ENCODE measurements at regions of chr4 and their contacts with region 1.

Region 1: GRCh38 chr4:103204111-103204510 is 6.0 kb upstream of the CENPE start:
- ATAC-seq: peak in 5 of 8 experiments; percentile 35 to 64 (median 48)
- H3K4me3 ChIP-seq: no peak overlapping the region
- H3K27ac ChIP-seq: no peak overlapping the region
- H3K4me1 ChIP-seq: no peaks in the 10 kb centered on the region

Region 2: GRCh38 chr4:102945066-102945465 is 259.0 kb before region 1 on chr4:
- in situ Hi-C with region 1: no loop called
- ATAC-seq: no peak
- H3K4me3 ChIP-seq: no peak overlapping the region
- H3K27ac ChIP-seq: no peak overlapping the region
- H3K4me1 ChIP-seq: no peaks in the 10 kb centered on the region

Region 3: GRCh38 chr4:102988429-102989020 is 215.6 kb before region 1 on chr4:
- in situ Hi-C with region 1: no loop called
- ATAC-seq: no peak
- H3K4me3 ChIP-seq: no peak overlapping the region
- H3K27ac ChIP-seq: no peak overlapping the region
- H3K4me1 ChIP-seq: no peaks in the 10 kb centered on the region

Region 4: DNA sequence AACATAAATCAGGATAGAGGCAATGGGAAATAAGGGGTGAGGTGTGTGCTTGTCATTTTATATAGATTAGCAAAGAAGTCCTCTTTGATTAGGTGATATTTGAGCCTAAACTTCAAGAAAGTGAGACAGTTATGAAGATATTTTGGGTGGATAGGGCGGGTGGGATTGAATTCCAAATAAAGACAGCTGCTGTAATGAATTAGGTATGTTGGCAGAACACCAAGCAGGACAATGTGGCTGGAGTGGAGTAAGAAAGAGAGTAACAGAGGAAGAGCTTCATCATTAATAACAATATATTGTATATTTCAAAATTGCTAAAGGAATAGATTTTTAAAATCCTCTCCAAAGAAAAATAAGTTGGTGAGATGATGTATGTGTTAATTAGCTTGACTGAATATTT is 85.1 kb after region 1 on chr4:
- in situ Hi-C with region 1: no loop called
- ATAC-seq: peak in 1 of 8 experiments; percentile 50
- H3K4me3 ChIP-seq: no peak overlapping the region
- H3K27ac ChIP-seq: no peak overlapping the region
- H3K4me1 ChIP-seq: peaks cover 0 to 2% of the 10 kb centered on the region in 2 donors

Region 5: GRCh38 chr4:103498161-103499070 is 294.3 kb after region 1 on chr4:
- in situ Hi-C with region 1: no loop called
- ATAC-seq: peak in 2 of 8 experiments; percentile 64 to 91
- H3K4me3 ChIP-seq: no peak overlapping the region
- H3K27ac ChIP-seq: no peak overlapping the region
- H3K4me1 ChIP-seq: no peaks in the 10 kb centered on the region

Region 6: DNA sequence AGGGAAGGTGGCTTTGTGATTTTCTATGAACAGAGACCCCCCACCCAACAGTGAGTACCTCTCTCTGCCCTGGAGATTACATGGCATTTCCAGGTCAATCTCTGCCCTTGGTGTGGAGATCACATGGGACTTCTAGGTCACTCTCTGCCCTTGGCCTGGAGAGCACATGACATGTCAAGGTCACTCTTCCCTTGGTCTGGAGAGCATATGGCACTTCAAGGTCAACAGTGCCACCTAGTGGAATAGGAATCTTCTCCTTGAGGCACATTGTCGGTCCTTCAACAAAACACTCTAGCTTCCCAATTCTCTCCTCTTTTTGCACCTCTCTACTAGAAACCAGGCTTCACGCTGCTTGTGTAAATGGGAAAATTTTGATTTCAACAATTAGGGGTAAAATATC is 581.9 kb after region 1 on chr4:
- in situ Hi-C with region 1: loop called in 3 of 9 experiments (anchors 25 kb)
- ATAC-seq: peak in 3 of 8 experiments; percentile 71 to 87 (median 79)
- H3K4me3 ChIP-seq: no peak overlapping the region
- H3K27ac ChIP-seq: no peak overlapping the region
- H3K4me1 ChIP-seq: no peaks in the 10 kb centered on the region

Region 7: GRCh38 chr4:103915224-103915869 is 711.2 kb after region 1 on chr4:
- in situ Hi-C with region 1: loop called in 3 of 9 experiments (anchors 10 to 25 kb)
- ATAC-seq: peak in 2 of 8 experiments; percentile 24 to 47
- H3K4me3 ChIP-seq: no peak overlapping the region
- H3K27ac ChIP-seq: no peak overlapping the region
- H3K4me1 ChIP-seq: no peaks in the 10 kb centered on the region

Region 8: GRCh38 chr4:103934178-103934789 is 730.2 kb after region 1 on chr4:
- in situ Hi-C with region 1: loop called in 1 of 9 experiments (anchors 25 kb)
- ATAC-seq: peak in 5 of 8 experiments; percentile 45 to 72 (median 51)
- H3K4me3 ChIP-seq: no peak overlapping the region
- H3K27ac ChIP-seq: no peak overlapping the region
- H3K4me1 ChIP-seq: no peaks in the 10 kb centered on the region

Measured in motor neuron (in vitro differentiated cells).